ENCODE measurements at regions of chr1 and their contacts with region 1.

Region 1: DNA sequence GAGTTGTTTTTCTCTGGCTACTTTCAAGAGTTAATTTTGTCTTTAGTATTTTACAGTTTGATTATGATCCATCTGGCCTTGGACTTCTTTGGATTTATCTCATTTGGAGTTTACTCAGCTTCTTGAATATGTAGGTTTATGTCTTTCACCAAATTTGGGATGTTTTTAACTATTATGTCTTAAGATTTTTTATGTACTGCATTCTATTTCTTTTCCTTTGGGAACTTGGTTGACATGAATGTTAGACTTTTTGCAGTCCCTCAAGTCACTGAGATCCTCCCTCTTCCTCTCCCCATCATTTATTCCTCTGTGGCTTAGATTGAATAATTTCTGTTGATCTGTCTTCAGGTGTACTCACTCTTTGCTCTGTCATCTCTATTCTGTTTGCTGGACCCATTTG is 112.0 kb downstream of the XPR1 start:
- DNase-seq: no peak
- H3K4me3 ChIP-seq: no peak overlapping the region
- CTCF ChIP-seq: no peak

Region 2: GRCh38 chr1:180674603-180675530 is 69.0 kb before region 1 on chr1:
- in situ Hi-C with region 1: no loop called
- DNase-seq: peak; percentile 8
- H3K4me3 ChIP-seq: no peak overlapping the region
- CTCF ChIP-seq: no peak

Region 3: DNA sequence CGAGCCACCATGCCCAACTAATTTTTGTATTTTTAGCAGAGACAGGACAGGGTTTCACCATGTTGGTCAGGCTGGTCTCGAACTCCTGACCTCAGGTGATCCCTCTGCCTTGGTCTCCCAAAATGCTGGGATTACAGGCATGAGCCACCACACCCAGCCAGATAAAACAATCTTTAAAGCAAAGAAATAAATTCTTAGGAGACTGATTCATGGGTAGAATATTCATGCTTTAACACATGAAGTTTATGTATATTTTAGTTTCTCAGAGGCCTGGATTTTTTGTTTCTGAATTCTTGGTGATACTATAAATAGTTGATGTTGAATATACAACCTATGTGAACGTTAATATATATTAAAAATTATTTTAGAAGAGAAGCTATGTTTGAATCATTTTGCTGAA is 41.4 kb after region 1 on chr1:
- in situ Hi-C with region 1: loop called (anchors 5 kb)
- DNase-seq: no peak
- H3K4me3 ChIP-seq: no peak overlapping the region
- CTCF ChIP-seq: no peak

Measured in astrocyte of the cerebellum (primary cell).